Breast epithelium (tissue), 4 donors: ENCODE measurements at regions of chr12 and their contacts with region 1.

Region 1: GRCh38 chr12:123242116-123242904 is 9.1 kb downstream of the MTRFR start:
- DNase-seq: no peak
- H3K4me3 ChIP-seq: no peak overlapping the region
- H3K27ac ChIP-seq: peak overlapping the region in 1 of 2 donors; percentile 26
- H3K4me1 ChIP-seq: no peaks in the 10 kb centered on the region
- H3K27me3 ChIP-seq: no peaks in the 10 kb centered on the region
- CTCF ChIP-seq: no peak
- POLR2A ChIP-seq: no peak

Region 2: GRCh38 chr12:122205063-122205925 is 1037.0 kb before region 1 on chr12:
- intact Hi-C with region 1: loop called (anchors 5 kb)
- DNase-seq: peak in 1 of 2 donors; percentile 30
- H3K4me3 ChIP-seq: no peak overlapping the region
- H3K27ac ChIP-seq: no peak overlapping the region
- H3K4me1 ChIP-seq: peaks cover 6 to 12% of the 10 kb centered on the region in 2 donors
- H3K27me3 ChIP-seq: peaks cover 0 to 3% of the 10 kb centered on the region in 2 donors
- CTCF ChIP-seq: no peak
- POLR2A ChIP-seq: no peak

Region 3: GRCh38 chr12:122937622-122938091 is 304.7 kb before region 1 on chr12:
- intact Hi-C with region 1: no loop called
- DNase-seq: no peak
- H3K4me3 ChIP-seq: no peak overlapping the region
- H3K27ac ChIP-seq: no peak overlapping the region
- H3K4me1 ChIP-seq: no peaks in the 10 kb centered on the region
- H3K27me3 ChIP-seq: no peaks in the 10 kb centered on the region
- CTCF ChIP-seq: no peak
- POLR2A ChIP-seq: no peak

Region 4: GRCh38 chr12:123264681-123265438 is 22.6 kb after region 1 on chr12:
- intact Hi-C with region 1: no loop called
- DNase-seq: no peak
- H3K4me3 ChIP-seq: no peak overlapping the region
- H3K27ac ChIP-seq: no peak overlapping the region
- H3K4me1 ChIP-seq: peaks cover 5 to 8% of the 10 kb centered on the region in 2 donors
- H3K27me3 ChIP-seq: no peaks in the 10 kb centered on the region
- CTCF ChIP-seq: no peak
- POLR2A ChIP-seq: no peak

Region 5: DNA sequence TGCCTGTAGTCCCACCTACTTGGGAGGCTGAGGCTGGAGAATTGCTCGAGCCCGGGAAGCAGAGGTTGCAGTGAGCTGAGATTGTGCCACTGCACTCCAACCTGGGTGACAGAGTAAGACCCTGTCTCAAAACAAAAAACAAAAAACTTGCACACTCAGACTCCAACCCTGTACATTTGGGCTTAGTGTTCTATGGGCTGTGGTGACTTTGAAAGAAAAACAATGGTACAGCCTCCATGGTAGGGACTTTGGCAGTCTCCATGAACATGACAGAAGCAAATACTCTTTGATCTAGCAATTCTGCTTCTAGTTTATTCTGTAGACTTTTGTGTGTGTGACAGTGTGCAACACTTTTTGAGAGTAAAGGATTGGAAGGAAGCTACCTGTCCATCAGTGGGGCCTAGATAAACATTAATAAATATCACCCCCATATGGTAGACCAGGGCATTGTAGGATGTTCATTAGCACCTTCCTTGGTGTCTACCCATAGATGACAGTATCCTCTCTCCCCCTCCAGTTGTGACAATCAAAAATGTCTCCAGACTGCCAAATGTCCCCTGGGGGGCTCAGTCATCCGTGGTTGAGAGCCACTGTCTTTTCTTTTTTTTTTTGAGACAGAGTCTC is 226.4 kb after region 1 on chr12:
- intact Hi-C with region 1: no loop called
- DNase-seq: no peak
- H3K4me3 ChIP-seq: no peak overlapping the region
- H3K27ac ChIP-seq: no peak overlapping the region
- H3K4me1 ChIP-seq: no peaks in the 10 kb centered on the region
- H3K27me3 ChIP-seq: no peaks in the 10 kb centered on the region
- CTCF ChIP-seq: no peak
- POLR2A ChIP-seq: no peak